Activated T-helper 2 cell treated with anti-CD3 and anti-CD28 coated beads, Interferon-gamma antibody, Interleukin-2, Interleukin-4, amounts not matched to agents 10 μg/mL and 5 μg/mL and 100 μg/mL, durations not matched to agents 14 hours and 24 hours and 36 hours (primary cell): ENCODE measurements at regions of chr14 and their contacts with region 1.

Region 1: DNA sequence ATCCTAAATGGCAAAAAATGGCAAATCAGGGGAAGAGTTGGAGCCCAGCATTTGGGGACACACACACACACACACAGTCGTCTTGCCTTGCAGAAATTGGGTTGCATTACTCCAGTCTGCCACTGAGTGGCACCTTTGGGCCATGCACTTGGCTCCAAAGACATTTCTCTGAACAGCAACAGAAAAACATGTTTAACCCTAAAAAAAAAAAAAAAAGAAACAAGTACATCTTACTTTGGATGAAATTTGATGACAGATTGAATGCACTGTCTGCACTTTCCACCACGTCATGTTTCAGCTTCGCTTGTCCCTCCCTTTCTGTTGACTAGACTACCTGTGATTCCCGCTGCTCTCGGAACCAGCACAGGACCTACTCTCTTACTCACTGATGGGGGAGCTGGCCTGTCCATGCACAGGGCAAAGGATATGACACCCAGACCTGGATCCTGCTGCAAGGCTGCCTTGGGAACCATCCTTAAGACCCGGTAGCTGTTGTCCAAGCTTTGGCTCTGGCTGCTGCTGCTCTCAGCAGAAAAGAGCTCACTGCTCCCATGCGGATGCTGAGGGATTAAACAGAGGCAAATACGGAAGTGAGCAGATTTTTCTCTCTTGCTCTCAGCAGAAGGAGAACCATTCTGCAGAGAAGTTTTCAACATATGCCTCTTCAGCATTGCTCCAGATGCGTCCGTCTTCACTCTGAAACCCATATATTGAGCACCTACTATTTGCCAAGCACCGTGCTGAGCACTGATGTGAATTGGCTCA is 376.8 kb downstream of the DPF3 start:
- DNase-seq: peak; percentile 69
- H3K4me3 Mint-ChIP-seq: no peak overlapping the region
- H3K27ac Mint-ChIP-seq: no peak overlapping the region
- H3K4me1 Mint-ChIP-seq: peaks cover 59% of the 10 kb centered on the region
- H3K27me3 Mint-ChIP-seq: peaks cover 25% of the 10 kb centered on the region

Region 2: DNA sequence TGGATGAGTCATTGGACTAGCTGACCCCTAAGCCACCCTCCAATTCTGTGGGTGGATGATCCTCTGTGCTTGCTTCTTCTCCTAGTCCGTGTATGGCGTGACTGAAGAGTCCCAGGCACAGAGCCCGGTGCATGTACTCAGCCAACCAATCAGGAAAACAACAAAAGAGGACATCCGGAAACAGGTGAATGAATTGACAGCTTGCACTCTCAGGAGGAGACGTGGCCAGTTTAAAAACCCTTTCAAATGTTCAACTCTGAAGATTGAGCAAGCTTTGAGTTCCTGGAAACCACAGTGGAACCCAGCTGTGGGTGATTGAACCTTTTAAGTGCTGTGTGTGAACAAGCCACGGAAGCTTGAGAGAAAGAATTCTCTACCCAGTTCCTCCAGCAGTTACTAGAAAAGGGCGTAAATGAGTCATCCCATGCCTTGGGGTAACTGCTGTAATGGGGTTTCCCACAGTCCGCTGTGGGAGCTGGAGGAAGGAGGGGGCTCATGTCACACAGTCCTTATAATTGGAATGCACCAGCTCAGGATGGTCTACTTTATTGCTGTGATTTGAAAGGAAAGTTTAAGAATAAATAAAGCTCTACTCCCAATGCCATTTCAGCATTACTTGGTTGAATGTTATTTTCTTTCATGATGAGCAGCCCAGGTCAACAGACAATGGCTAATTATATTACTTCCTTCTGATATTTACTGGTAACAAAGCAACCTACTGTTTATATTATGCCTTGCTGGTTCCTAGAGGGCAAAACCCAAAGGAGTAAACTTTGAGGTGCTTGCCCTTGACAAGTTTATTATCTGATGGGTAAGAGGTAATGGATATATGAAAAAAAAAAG is 40.2 kb before region 1 on chr14:
- intact Hi-C with region 1: loop called (anchors 2 kb)
- DNase-seq: peak; percentile 80
- H3K4me3 Mint-ChIP-seq: peak overlapping the region; percentile 35
- H3K27ac Mint-ChIP-seq: peak overlapping the region; percentile 73
- H3K4me1 Mint-ChIP-seq: peaks cover 69% of the 10 kb centered on the region
- H3K27me3 Mint-ChIP-seq: peaks cover 5% of the 10 kb centered on the region

Region 3: GRCh38 chr14:72594099-72594901 is 77.2 kb after region 1 on chr14:
- intact Hi-C with region 1: loop called (anchors 1 kb)
- DNase-seq: peak; percentile 70
- H3K4me3 Mint-ChIP-seq: peak overlapping the region; percentile 1
- H3K27ac Mint-ChIP-seq: peak overlapping the region; percentile 38
- H3K4me1 Mint-ChIP-seq: peaks cover 45% of the 10 kb centered on the region
- H3K27me3 Mint-ChIP-seq: peaks cover 49% of the 10 kb centered on the region

Region 4: GRCh38 chr14:72714094-72714493 is 197.0 kb after region 1 on chr14:
- intact Hi-C with region 1: loop called (anchors 5 kb)
- DNase-seq: peak; percentile 22
- H3K4me3 Mint-ChIP-seq: peak overlapping the region; percentile 5
- H3K27ac Mint-ChIP-seq: no peak overlapping the region
- H3K4me1 Mint-ChIP-seq: peaks cover 31% of the 10 kb centered on the region
- H3K27me3 Mint-ChIP-seq: peaks cover 9% of the 10 kb centered on the region

Region 5: GRCh38 chr14:72904840-72905561 is 387.9 kb after region 1 on chr14:
- intact Hi-C with region 1: loop called (anchors 1 kb)
- DNase-seq: peak; percentile 34
- H3K4me3 Mint-ChIP-seq: no peak overlapping the region
- H3K27ac Mint-ChIP-seq: no peak overlapping the region
- H3K4me1 Mint-ChIP-seq: peaks cover 12% of the 10 kb centered on the region
- H3K27me3 Mint-ChIP-seq: peaks cover 55% of the 10 kb centered on the region